ENCODE measurements at regions of chr11 and their contacts with region 1.

Region 1: DNA sequence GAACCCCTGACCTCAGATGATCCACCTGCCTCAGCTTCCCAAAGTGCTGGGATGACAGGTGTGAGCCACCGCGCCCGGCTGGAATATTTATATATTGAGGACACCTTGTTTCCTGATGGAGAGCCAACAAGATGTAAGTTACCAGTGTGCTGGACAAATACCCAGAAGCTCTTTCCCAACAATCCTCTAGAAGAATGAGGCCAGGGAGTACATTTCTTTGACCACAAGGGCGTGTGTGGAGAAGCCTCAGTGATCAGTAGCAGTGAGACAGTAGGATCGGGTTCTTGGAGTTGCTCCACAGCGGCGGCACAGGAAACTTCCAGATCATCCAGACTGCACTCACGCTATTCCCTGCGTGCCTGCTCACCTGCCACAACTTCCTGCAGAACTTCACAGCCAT is 10.3 kb upstream of the POLA2 start:
- DNase-seq: no peak
- ATAC-seq: no peak
- H3K4me3 ChIP-seq: no peak overlapping the region
- H3K27ac ChIP-seq: no peak overlapping the region
- H3K4me1 ChIP-seq: peaks cover 3 to 6% of the 10 kb centered on the region in 2 experiments; a peak in 1 of 4 replicates
- H3K27me3 ChIP-seq: no peaks in the 10 kb centered on the region
- CTCF ChIP-seq: 0 out of 6 replicates have a peak, but pooled peaks of 1 of the 3 experiments have one; percentile 1
- POLR2A ChIP-seq: no peak
- RAD21 ChIP-seq: no peak

Region 2: DNA sequence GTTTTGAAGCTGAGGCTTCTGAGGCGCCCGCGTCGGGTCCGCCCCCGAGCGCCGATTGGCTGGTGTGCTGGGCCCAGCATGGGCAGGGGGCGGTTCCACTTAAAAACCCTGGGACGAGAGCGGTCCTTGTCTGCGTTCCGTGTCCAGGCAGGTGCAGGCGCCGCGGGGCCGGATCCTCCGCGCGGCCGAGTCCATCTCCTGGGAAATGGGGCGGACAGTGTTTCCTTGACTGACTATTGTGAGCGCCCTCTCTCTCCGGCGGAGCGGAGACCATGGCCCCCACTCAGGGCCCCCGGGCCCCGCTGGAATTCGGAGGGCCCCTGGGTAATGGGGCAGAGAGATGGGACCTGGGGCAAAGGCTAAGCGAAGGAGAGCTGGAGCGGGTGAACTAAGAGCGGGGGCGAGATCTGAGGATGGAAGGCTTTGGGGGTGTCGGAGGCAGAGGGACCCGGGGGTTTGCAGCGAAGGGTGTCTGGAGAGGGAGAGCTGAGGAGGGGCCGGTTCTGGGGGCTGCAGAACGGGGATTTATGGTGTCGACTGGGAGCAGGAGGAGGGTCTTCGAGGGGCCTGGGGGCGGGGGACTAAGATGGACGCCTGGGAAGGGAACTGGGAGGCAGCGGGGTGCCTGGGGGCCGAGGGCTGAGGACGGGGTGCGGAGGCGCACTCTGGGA is 139.6 kb before region 1 on chr11 and contains the start of gene TM7SF2:
- CTCF ChIA-PET with region 1: interaction called, 4 read pairs
- POLR2A ChIA-PET with region 1: no interaction called
- RAD21 ChIA-PET with region 1: no interaction called
- intact Hi-C with region 1: loop called (anchors 1 kb)
- DNase-seq: peak; percentile 89
- ATAC-seq: peak; percentile 81
- H3K4me3 ChIP-seq: peak within 1 kb of the TSS; percentile 66 to 76
- H3K27ac ChIP-seq: peak within 1 kb of the TSS; percentile 82
- H3K4me1 ChIP-seq: peaks cover 22 to 50% of the 10 kb centered on the region in 2 experiments
- H3K27me3 ChIP-seq: no peaks in the 10 kb centered on the region
- CTCF ChIP-seq: no peak
- POLR2A ChIP-seq: peak; percentile 99
- RAD21 ChIP-seq: no peak
- total RNA-seq, gene TM7SF2: 52.9 TPM

Region 3: GRCh38 chr11:65204646-65205601 is 46.6 kb before region 1 on chr11:
- CTCF ChIA-PET with region 1: interaction called, 6 read pairs
- POLR2A ChIA-PET with region 1: no interaction called
- RAD21 ChIA-PET with region 1: no interaction called
- intact Hi-C with region 1: loop called (anchors 2 kb)
- DNase-seq: no peak
- ATAC-seq: peak; percentile 86
- H3K4me3 ChIP-seq: no peak overlapping the region
- H3K27ac ChIP-seq: no peak overlapping the region
- H3K4me1 ChIP-seq: no peaks in the 10 kb centered on the region; a peak in 1 of 4 replicates
- H3K27me3 ChIP-seq: no peaks in the 10 kb centered on the region
- CTCF ChIP-seq: peak; percentile 71 to 96 (median 95)
- POLR2A ChIP-seq: no peak
- RAD21 ChIP-seq: peak; percentile 72

Region 4: DNA sequence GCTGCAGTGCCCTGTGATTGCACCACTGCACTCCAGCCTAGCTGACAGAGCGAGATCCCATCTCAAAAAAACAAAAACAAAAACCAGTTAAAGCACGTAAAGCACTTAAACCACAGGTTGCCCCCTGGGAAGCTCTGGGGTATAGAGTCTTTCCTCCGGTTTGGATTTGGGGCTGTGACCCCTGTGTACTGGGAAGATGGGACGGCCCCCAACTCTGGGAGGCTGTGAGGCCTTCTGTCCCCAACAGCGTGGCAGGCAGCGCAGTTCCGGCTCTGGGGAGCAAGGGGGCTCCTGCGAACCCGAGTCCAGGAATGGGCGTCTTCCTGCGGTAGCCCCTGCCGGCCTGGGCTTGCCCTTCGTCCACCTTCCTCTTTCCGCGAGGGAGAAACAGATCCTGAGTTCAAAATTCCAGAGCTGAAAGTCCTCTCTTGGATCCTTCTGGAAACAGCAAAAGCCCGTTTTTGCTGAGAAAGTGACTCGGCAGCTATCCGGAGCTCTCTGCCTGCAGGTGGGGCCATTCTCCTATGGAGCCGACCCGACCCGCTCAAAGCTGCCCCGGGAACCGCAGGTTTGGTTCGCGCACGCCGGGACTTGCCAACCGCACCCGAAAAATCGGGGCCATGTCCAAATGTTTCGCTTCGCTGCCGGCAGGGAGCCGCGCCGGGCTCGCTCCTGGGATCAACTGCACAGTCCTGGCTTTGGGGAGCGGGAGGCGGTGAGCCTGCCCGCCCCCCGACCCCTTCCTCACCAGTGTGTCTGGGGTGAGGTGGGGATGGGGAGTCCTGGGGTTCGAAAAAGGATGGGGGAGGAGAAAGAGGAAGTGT is 26.0 kb before region 1 on chr11:
- CTCF ChIA-PET with region 1: interaction called, 3 read pairs
- POLR2A ChIA-PET with region 1: no interaction called
- RAD21 ChIA-PET with region 1: no interaction called
- intact Hi-C with region 1: loop called (anchors 2 kb)
- DNase-seq: no peak
- ATAC-seq: peak; percentile 79
- H3K4me3 ChIP-seq: no peak overlapping the region
- H3K27ac ChIP-seq: peak overlapping the region; percentile 56
- H3K4me1 ChIP-seq: peaks cover 13 to 18% of the 10 kb centered on the region in 2 experiments
- H3K27me3 ChIP-seq: no peaks in the 10 kb centered on the region
- CTCF ChIP-seq: peak; percentile 28 to 42 (median 32); a peak in 3 of 6 replicates
- POLR2A ChIP-seq: no peak
- RAD21 ChIP-seq: peak; percentile 31; the same call in 1 of the 2 replicates

Region 5: GRCh38 chr11:65301491-65302329 is 50.2 kb after region 1 on chr11:
- CTCF ChIA-PET with region 1: no interaction called
- POLR2A ChIA-PET with region 1: no interaction called
- RAD21 ChIA-PET with region 1: no interaction called
- intact Hi-C with region 1: no loop called
- DNase-seq: no peak
- ATAC-seq: peak; percentile 56
- H3K4me3 ChIP-seq: no peak overlapping the region
- H3K27ac ChIP-seq: no peak overlapping the region
- H3K4me1 ChIP-seq: peaks cover 0 to 5% of the 10 kb centered on the region in 2 experiments; a peak in 1 of 4 replicates
- H3K27me3 ChIP-seq: no peaks in the 10 kb centered on the region
- CTCF ChIP-seq: no peak
- POLR2A ChIP-seq: no peak
- RAD21 ChIP-seq: no peak